HEK293T (cell line): ENCODE measurements at regions of chr16 and their contacts with region 1.

Region 1: DNA sequence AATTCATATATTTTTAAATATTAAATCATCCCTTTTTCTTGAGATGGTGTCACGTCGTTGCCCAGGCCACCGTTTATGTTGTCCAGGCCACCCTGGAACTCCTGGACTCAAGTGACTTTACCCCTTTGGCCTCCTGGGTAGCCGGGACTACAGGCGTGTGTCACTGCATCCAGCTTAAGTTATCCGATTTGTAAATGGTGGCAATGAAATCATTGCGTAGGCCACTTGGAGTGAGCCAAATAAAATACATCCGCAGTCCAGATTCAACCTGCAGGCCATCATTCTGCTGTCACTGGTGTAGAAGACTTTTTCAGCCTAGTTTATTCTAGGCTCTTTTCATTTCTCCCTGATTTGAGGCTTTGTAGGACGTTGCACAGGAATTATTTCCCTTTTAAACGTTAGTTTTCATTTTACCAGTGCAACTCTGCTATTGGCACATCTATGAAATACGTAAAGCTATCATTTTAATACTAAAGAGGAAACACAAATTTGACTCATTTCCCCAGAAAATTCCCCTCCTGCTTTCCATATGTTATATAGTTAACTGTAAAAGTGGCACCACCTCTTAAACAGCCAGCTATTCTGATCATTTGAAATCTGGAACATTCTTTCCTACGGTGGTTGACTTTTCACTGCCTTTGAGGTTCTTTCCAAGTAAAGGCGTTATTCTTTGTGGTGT is 449.8 kb downstream of the MAF start:
- DNase-seq: no peak

Region 2: DNA sequence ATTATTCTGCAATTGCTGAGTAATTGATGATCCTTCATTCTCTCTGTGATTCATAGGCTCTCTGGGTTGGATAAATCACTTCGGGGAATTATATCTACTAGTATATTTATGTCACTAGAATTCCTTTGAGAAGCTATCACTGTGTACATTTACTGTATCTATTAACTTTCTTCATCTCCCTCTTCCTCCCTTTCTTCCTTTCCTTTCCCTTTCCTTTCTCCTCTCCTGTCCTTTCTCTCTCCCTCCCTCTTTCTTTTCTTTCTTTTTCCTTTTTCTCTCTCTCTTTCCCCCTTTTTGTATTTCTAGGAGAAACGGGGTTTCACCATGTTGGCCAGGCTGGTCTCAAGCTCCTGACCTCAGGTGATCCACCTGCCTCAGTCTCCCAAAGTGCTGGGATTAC is 339.5 kb before region 1 on chr16:
- CTCF ChIA-PET with region 1: interaction called, 10 read pairs
- POLR2A ChIA-PET with region 1: no interaction called
- DNase-seq: no peak

Region 3: GRCh38 chr16:79083508-79084299 is 67.1 kb before region 1 on chr16:
- CTCF ChIA-PET with region 1: no interaction called
- POLR2A ChIA-PET with region 1: no interaction called
- DNase-seq: no peak